Activated CD4-positive, alpha-beta memory T cell treated with anti-CD3 and anti-CD28 coated beads for 36 hours (primary cell): ENCODE measurements at regions of chr1 and their contacts with region 1.

Region 1: DNA sequence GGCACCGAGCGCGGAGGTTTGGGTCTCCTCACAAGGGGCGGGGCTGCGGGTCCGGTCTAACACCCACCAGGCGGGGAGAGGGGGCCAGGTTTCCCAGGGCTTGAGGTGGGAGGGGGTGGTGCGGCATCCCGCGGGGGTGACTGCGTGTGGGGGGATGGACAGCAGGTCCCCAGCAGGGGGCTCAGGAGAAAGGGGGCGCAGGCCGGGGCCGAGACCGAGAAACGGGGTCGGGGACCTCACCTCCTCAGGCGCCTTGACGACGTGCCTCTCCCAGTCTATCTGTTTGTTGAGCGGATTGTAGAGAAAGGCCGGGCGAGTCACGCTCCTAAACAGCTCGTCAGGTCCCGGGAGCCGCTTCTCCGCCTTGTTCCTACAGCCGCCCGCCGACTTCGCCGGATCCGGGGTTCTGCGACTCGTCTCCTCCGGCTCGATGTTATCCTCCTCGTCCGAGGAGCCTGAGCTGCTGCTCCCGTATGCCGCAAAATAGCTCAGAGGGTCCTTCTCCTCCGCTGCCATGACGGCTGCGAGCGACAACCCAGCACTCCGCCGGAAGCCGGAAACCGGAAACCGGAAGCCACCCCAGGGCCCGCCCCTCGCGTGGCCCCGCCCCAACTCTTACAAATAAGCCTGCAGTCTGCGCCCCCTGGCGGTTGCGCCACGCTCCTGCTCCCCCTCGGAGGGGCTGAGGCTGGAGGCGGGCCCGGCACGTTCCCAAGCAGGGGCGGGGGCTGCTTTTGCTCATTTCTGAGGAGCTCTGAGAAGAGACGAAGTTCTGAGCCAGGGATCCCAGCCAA is at the start of gene C1orf52:
- DNase-seq: peak; percentile 97
- H3K4me3 Mint-ChIP-seq: peak within 1 kb of the TSS; percentile 97
- H3K27ac Mint-ChIP-seq: peak within 1 kb of the TSS; percentile 92
- H3K4me1 Mint-ChIP-seq: peaks cover 33% of the 10 kb centered on the region
- H3K27me3 Mint-ChIP-seq: no peaks in the 10 kb centered on the region
- total RNA-seq, gene C1orf52: 19.4 to 21.8 TPM

Region 2: GRCh38 chr1:84724128-84724860 is 535.0 kb before region 1 on chr1:
- CTCF ChIA-PET with region 1: no interaction called
- POLR2A ChIA-PET with region 1: no interaction called
- intact Hi-C with region 1: no loop called
- DNase-seq: peak; percentile 71
- H3K4me3 Mint-ChIP-seq: no peak overlapping the region
- H3K27ac Mint-ChIP-seq: no peak overlapping the region
- H3K4me1 Mint-ChIP-seq: peaks cover 14% of the 10 kb centered on the region
- H3K27me3 Mint-ChIP-seq: no peaks in the 10 kb centered on the region

Region 3: DNA sequence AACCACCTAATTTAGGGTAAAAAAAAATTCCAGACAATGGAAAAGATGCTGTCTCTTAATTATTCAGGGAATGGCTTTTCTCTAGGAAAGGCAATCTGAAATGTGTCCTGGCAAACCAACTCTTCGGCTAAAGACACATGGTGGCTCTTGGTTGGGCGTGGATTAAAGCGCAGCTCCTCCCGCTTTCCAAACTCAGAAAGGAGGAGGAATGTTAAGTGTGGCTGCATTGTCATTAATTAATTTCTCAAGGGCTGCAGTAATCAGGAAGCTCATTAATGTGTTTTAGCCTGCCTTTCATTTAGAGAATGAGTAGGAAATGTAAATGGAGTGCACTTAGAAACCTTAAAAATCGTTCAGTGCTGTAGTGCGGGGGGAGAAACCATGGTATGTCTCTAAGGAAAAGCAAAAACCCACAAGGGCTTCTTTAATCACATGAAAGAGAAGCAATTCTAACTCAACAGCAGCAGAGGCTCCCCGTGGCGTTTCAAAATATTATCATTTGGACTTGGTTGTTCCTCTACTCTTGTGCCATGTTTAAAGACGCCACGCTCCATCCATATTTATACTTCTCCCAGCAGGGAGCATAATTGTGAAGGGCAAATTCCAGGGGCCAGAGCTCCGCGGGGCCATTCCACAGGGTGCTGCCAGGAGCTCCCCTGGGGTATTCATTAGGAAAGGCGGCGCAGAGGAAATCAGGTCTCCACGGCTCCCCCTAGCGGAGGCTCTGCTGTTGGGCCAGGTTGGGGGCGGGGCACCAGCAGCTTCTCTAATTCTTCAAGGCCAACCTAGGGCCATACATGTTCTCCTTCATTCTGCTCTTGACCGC is 477.2 kb before region 1 on chr1:
- CTCF ChIA-PET with region 1: interaction called, 4 read pairs
- POLR2A ChIA-PET with region 1: no interaction called
- intact Hi-C with region 1: loop called (anchors 10 kb)
- DNase-seq: peak; percentile 88
- H3K4me3 Mint-ChIP-seq: peak overlapping the region; percentile 67
- H3K27ac Mint-ChIP-seq: no peak overlapping the region
- H3K4me1 Mint-ChIP-seq: peaks cover 17% of the 10 kb centered on the region
- H3K27me3 Mint-ChIP-seq: no peaks in the 10 kb centered on the region

Region 4: DNA sequence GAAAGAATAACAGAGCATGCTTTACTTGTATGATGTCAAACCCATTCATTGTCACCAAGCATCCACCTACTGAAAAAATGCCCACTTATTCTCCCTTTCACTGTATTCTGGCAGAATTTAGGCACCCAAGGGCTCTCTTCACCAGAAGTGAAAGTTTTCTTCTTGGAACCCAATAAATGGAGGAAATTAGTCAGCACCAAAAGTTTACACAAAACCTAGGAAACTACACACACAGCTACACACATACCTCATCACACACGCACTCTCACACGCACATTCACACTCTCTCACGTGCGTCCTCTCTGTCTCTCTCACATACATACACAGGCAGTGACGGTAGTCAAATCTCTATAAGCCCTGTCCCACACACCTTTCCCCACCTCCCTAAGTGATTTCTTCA is 300.0 kb before region 1 on chr1:
- CTCF ChIA-PET with region 1: interaction called, 12 read pairs
- POLR2A ChIA-PET with region 1: no interaction called
- intact Hi-C with region 1: no loop called
- DNase-seq: peak; percentile 81
- H3K4me3 Mint-ChIP-seq: no peak overlapping the region
- H3K27ac Mint-ChIP-seq: peak overlapping the region; percentile 72
- H3K4me1 Mint-ChIP-seq: peaks cover 32% of the 10 kb centered on the region
- H3K27me3 Mint-ChIP-seq: no peaks in the 10 kb centered on the region

Region 5: DNA sequence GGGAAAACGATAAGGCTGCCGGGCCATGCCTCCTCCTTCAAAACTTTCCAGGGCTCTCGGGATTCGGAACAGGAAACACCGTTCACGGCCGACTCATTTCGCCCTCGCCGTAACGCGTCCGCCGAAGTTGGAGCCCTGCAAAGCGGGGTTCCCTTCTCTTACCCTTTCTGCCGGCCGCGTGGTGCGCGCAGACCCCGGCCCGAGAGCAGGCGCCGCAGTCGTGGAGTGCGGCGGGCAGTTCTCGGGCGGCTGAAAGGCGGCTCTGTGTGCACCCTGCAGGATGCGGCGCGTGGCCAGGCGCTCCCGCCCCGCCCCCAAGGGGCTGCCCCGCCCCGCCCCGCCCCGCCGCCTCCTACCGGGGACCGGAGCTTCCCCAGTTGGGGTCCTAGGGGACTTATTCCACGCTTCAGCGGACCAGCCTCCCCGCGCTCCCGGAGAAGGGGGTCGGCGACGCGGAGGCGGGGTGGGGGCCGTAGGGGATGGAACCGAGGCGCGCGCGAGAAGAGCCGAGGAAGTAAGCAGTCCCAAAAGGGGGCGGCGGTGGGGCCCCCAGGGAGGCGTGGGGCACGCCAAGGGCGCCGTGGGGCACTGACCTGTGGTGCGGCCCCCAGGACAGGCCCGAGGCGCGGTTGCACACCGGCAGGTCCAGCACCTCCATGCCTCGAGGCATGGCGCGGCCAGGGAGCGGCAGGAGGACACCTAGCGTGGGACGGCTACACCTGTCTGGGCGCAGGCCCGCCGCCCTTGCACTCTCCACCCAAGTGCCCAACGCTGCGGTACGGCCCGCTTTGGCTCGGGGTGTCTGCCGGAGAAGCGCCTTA is 262.3 kb before region 1 on chr1 and contains the start of gene MCOLN2:
- CTCF ChIA-PET with region 1: interaction called, 9 read pairs
- POLR2A ChIA-PET with region 1: no interaction called
- intact Hi-C with region 1: loop called (anchors 1 kb)
- DNase-seq: peak; percentile 68
- H3K4me3 Mint-ChIP-seq: peak within 1 kb of the TSS; percentile 77
- H3K27ac Mint-ChIP-seq: peak within 1 kb of the TSS; percentile 95
- H3K4me1 Mint-ChIP-seq: peaks cover 40% of the 10 kb centered on the region
- H3K27me3 Mint-ChIP-seq: peaks cover 12% of the 10 kb centered on the region
- total RNA-seq, gene MCOLN2: 42.1 to 43.2 TPM

Region 6: DNA sequence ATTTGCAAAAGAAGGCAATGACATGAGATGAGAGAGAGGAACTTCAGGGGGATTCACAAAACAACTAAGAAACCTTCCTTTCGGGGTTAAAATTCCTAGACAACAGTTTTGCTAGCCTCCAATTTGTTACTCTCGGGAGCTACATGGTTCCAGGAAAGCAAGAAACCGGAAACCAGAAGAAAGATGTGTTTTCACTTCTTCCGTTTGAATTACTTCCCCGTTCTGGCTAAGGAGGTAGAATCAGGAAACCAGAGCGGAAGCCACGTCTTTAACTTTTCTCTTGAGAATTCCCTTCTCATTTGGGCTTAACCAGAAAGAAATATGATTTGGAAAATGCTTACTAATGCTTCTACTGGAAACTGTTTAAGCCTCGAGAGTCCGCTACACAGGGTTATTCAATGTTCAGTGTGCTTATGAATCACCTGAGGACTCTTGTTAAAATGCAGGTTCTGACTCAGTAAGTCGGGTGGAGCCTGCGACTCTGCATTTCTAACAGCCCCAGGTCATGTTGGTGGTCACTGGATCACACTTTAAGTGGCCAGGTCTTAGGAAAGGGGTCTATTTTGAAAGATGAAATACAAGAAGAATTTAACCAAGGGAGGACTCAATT is 167.5 kb before region 1 on chr1:
- CTCF ChIA-PET with region 1: no interaction called
- POLR2A ChIA-PET with region 1: no interaction called
- intact Hi-C with region 1: no loop called
- DNase-seq: peak; percentile 53
- H3K4me3 Mint-ChIP-seq: peak overlapping the region; percentile 49
- H3K27ac Mint-ChIP-seq: no peak overlapping the region
- H3K4me1 Mint-ChIP-seq: peaks cover 7% of the 10 kb centered on the region
- H3K27me3 Mint-ChIP-seq: peaks cover 6% of the 10 kb centered on the region

Region 7: DNA sequence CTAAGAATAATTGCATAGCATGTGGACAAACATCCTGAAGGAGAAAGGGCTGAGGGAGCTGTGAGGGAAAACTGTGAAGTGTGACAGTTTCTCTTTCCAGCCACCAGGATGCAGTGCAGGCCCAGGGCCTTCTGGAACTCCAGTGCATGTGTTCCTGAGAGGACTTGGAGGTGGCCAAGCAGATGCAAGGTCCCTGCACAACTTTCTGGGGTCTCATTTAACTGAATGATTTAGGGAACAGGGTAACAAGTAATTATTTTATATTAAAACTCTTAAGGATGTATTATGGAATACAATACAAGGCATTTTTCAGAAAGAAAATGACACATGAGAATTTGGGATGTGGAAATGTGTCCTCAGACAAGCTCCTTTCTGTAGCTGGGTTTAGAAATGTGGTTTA is 149.8 kb before region 1 on chr1:
- CTCF ChIA-PET with region 1: interaction called, 36 read pairs
- POLR2A ChIA-PET with region 1: no interaction called
- intact Hi-C with region 1: loop called (anchors 1 kb)
- DNase-seq: peak; percentile 51
- H3K4me3 Mint-ChIP-seq: no peak overlapping the region
- H3K27ac Mint-ChIP-seq: no peak overlapping the region
- H3K4me1 Mint-ChIP-seq: no peaks in the 10 kb centered on the region
- H3K27me3 Mint-ChIP-seq: no peaks in the 10 kb centered on the region

Region 8: GRCh38 chr1:85297855-85298629 is 38.7 kb after region 1 on chr1:
- CTCF ChIA-PET with region 1: interaction called, 4 read pairs
- POLR2A ChIA-PET with region 1: no interaction called
- intact Hi-C with region 1: loop called (anchors 1 kb)
- DNase-seq: peak; percentile 91
- H3K4me3 Mint-ChIP-seq: peak overlapping the region; percentile 42
- H3K27ac Mint-ChIP-seq: peak overlapping the region; percentile 71
- H3K4me1 Mint-ChIP-seq: peaks cover 27% of the 10 kb centered on the region
- H3K27me3 Mint-ChIP-seq: peaks cover 38% of the 10 kb centered on the region